Right lobe of liver (tissue), 6 donors: ENCODE measurements at regions of chr6 and their contacts with region 1.

Region 1: GRCh38 chr6:2344319-2344905 is 99.0 kb upstream of the GMDS start:
- DNase-seq: no peak
- ATAC-seq: no peak
- H3K4me3 ChIP-seq: no peak overlapping the region
- H3K27ac ChIP-seq: no peak overlapping the region
- H3K4me1 ChIP-seq: no peaks in the 10 kb centered on the region
- H3K27me3 ChIP-seq: no peaks in the 10 kb centered on the region
- CTCF ChIP-seq: no peak
- POLR2A ChIP-seq: no peak

Region 2: GRCh38 chr6:1893470-1894130 is 450.8 kb before region 1 on chr6:
- intact Hi-C with region 1: no loop called
- DNase-seq: no peak
- ATAC-seq: no peak
- H3K4me3 ChIP-seq: no peak overlapping the region
- H3K27ac ChIP-seq: no peak overlapping the region
- H3K4me1 ChIP-seq: no peaks in the 10 kb centered on the region
- H3K27me3 ChIP-seq: no peaks in the 10 kb centered on the region
- CTCF ChIP-seq: no peak
- POLR2A ChIP-seq: no peak

Region 3: GRCh38 chr6:2209226-2209809 is 135.1 kb before region 1 on chr6:
- intact Hi-C with region 1: loop called in 1 of 2 experiments (anchors 10 kb)
- DNase-seq: peak in 1 of 3 donors; percentile 66
- ATAC-seq: peak; percentile 86 to 96 (median 93)
- H3K4me3 ChIP-seq: no peak overlapping the region
- H3K27ac ChIP-seq: no peak overlapping the region
- H3K4me1 ChIP-seq: no peaks in the 10 kb centered on the region
- H3K27me3 ChIP-seq: no peaks in the 10 kb centered on the region
- CTCF ChIP-seq: peak; percentile 40 to 64 (median 52)
- POLR2A ChIP-seq: no peak